ENCODE measurements at regions of chr11 and their contacts with region 1.

Region 1: GRCh38 chr11:60242740-60243239 is at the start of gene MS4A4E:
- H3K4me3 Mint-ChIP-seq: peak within 1 kb of the TSS; percentile 74
- H3K27ac Mint-ChIP-seq: peak within 1 kb of the TSS; percentile 95
- H3K4me1 Mint-ChIP-seq: peaks cover 68% of the 10 kb centered on the region
- H3K27me3 Mint-ChIP-seq: no peaks in the 10 kb centered on the region

Region 2: GRCh38 chr11:59822989-59823566 is 419.7 kb before region 1 on chr11:
- intact Hi-C with region 1: loop called (anchors 5 kb)
- H3K4me3 Mint-ChIP-seq: no peak overlapping the region
- H3K27ac Mint-ChIP-seq: no peak overlapping the region
- H3K4me1 Mint-ChIP-seq: peaks cover 17% of the 10 kb centered on the region
- H3K27me3 Mint-ChIP-seq: no peaks in the 10 kb centered on the region

Region 3: DNA sequence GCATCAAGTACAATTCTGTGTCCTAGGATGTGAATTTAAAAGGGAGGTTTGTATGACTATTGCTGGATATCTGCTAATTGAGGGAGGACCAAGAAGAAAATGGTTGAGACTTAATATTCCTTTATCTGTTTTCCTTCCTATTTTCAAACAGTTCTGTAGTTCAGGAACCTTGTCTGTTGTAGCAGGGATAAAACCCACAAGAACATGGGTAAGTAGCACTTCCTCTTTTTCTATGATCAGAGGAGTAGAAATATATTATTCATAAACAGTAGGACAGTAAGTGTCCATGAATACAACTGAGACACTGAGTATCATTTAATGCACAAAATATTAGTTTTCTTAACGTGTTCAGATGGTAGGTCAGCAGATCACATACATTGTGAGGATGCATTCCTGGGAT is 178.7 kb before region 1 on chr11:
- intact Hi-C with region 1: no loop called
- H3K4me3 Mint-ChIP-seq: no peak overlapping the region
- H3K27ac Mint-ChIP-seq: no peak overlapping the region
- H3K4me1 Mint-ChIP-seq: peaks cover 12% of the 10 kb centered on the region
- H3K27me3 Mint-ChIP-seq: no peaks in the 10 kb centered on the region

Region 4: DNA sequence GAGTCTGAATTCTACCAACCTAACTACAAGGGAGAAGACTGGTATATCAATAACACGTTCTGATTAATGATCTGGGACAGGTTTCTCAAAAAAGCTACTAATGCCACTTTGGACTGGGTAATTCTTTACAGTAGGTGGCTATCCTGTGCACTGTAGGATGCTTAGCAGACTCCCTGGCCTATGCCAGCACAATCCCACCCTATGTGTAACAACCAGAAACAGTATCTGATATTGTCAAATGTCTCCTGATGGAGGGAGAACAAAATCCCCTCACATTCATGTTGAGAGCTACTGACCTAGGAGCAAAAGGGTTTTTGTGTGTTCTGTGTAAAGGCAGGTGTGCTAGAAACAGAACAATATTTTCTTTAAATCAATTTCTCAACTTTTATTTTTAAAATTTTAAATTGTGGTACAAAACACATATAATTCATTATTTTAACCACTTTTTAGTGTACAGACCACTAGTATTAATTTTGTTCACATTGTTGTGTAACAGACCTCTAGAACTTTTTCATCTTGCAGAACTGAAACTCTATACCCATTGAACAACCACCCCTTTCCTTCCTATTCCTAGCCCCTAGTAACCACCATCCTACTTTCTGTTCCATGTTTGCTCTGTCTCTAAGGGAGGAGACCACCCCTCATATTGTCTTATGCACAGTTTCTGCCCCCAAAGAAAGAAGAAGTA is 57.8 kb before region 1 on chr11:
- intact Hi-C with region 1: loop called (anchors 5 kb)
- H3K4me3 Mint-ChIP-seq: peak overlapping the region; percentile 78
- H3K27ac Mint-ChIP-seq: peak overlapping the region; percentile 87
- H3K4me1 Mint-ChIP-seq: peaks cover 67% of the 10 kb centered on the region
- H3K27me3 Mint-ChIP-seq: no peaks in the 10 kb centered on the region

Region 5: GRCh38 chr11:60193687-60194433 is 48.9 kb before region 1 on chr11:
- intact Hi-C with region 1: loop called (anchors 5 kb)
- H3K4me3 Mint-ChIP-seq: peak overlapping the region; percentile 8
- H3K27ac Mint-ChIP-seq: peak overlapping the region; percentile 91
- H3K4me1 Mint-ChIP-seq: peaks cover 66% of the 10 kb centered on the region
- H3K27me3 Mint-ChIP-seq: no peaks in the 10 kb centered on the region

Region 6: DNA sequence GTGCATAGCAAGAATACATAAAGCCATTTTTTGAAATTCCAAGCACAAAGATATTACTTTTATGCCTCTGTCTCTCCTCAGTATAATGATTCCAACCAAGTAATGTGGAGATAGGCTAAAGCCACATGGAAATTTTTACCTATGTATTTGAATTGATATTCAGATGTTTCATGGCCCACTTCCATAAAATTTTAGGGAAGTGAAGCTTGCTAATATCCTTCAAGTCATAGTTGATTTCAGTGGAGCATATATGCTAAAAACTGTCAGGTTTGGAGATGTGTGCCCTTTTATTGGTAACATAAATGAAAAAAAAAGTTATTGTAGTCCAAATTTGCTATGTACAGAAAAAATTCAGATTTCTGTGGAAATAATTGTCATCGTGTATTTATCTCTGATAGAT is 12.1 kb before region 1 on chr11:
- intact Hi-C with region 1: no loop called
- H3K4me3 Mint-ChIP-seq: peak overlapping the region; percentile 26
- H3K27ac Mint-ChIP-seq: peak overlapping the region; percentile 64
- H3K4me1 Mint-ChIP-seq: peaks cover 72% of the 10 kb centered on the region
- H3K27me3 Mint-ChIP-seq: no peaks in the 10 kb centered on the region